Caco-2 (cell line): ENCODE measurements at regions of chr11 and their contacts with region 1.

Region 1: GRCh38 chr11:95067039-95067840 is 521 bp downstream of the SRSF8 start:
- DNase-seq: peak; percentile 88 to 95
- H3K4me3 ChIP-seq: peak overlapping the region; percentile 46
- H3K4me3 Mint-ChIP-seq: peak overlapping the region; percentile 100
- H3K27ac Mint-ChIP-seq: peak overlapping the region; percentile 99
- H3K4me1 ChIP-seq: peaks cover 12% of the 10 kb centered on the region
- H3K4me1 Mint-ChIP-seq: peaks cover 15% of the 10 kb centered on the region
- H3K27me3 ChIP-seq: no peaks in the 10 kb centered on the region
- H3K27me3 Mint-ChIP-seq: peaks cover 12% of the 10 kb centered on the region
- CTCF ChIP-seq: peak; percentile 52 to 98

Region 2: GRCh38 chr11:94543695-94544645 is 523.3 kb before region 1 on chr11 and contains the start of gene FUT4:
- CTCF ChIA-PET with region 1: no interaction called
- POLR2A ChIA-PET with region 1: interaction called, 4 read pairs
- intact Hi-C with region 1: loop called (anchors 5 kb)
- DNase-seq: peak; percentile 96 to 98
- H3K4me3 ChIP-seq: peak within 1 kb of the TSS; percentile 71
- H3K4me3 Mint-ChIP-seq: peak within 1 kb of the TSS; percentile 86
- H3K27ac Mint-ChIP-seq: peak within 1 kb of the TSS; percentile 90
- H3K4me1 ChIP-seq: peaks cover 29% of the 10 kb centered on the region
- H3K4me1 Mint-ChIP-seq: peaks cover 34% of the 10 kb centered on the region
- H3K27me3 ChIP-seq: no peaks in the 10 kb centered on the region
- H3K27me3 Mint-ChIP-seq: no peaks in the 10 kb centered on the region
- CTCF ChIP-seq: no peak
- total RNA-seq, gene FUT4: 24.5 and 25.0 TPM in 2 replicates

Region 3: DNA sequence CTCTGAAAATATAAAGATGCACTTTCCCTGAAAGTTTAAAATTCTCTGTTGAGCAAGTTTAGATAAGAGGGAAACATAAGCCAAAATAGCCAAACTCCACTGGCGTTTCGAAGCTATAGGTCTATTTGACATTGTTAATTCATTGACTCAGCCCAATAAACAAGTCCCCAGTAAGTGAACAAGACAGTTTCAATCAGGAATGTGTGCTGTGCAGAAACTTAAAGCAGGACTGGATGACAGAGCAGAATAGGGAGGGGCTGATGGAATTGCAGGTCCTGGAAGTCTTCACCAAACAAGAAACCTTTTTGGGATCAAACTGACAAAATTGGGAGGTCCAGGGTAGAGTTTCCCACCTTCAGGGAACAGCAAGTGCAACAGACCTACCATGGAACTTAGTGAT is 51.1 kb before region 1 on chr11:
- CTCF ChIA-PET with region 1: no interaction called
- POLR2A ChIA-PET with region 1: no interaction called
- intact Hi-C with region 1: loop called (anchors 2 kb)
- DNase-seq: peak in 1 of 2 experiments; percentile 35
- H3K4me3 ChIP-seq: no peak overlapping the region
- H3K4me3 Mint-ChIP-seq: no peak overlapping the region
- H3K27ac Mint-ChIP-seq: no peak overlapping the region
- H3K4me1 ChIP-seq: peaks cover 3% of the 10 kb centered on the region; the same call in 1 of the 2 replicates
- H3K4me1 Mint-ChIP-seq: peaks cover 6% of the 10 kb centered on the region
- H3K27me3 ChIP-seq: no peaks in the 10 kb centered on the region
- H3K27me3 Mint-ChIP-seq: no peaks in the 10 kb centered on the region
- CTCF ChIP-seq: no peak

Region 4: GRCh38 chr11:95138448-95138847 is 71.2 kb after region 1 on chr11:
- CTCF ChIA-PET with region 1: interaction called, 23 read pairs
- POLR2A ChIA-PET with region 1: interaction called, 3 read pairs
- intact Hi-C with region 1: loop called (anchors 1 kb)
- DNase-seq: peak in 1 of 2 experiments; percentile 61
- H3K4me3 ChIP-seq: no peak overlapping the region
- H3K4me3 Mint-ChIP-seq: no peak overlapping the region
- H3K27ac Mint-ChIP-seq: no peak overlapping the region
- H3K4me1 ChIP-seq: no peaks in the 10 kb centered on the region
- H3K4me1 Mint-ChIP-seq: peaks cover 5% of the 10 kb centered on the region
- H3K27me3 ChIP-seq: no peaks in the 10 kb centered on the region
- H3K27me3 Mint-ChIP-seq: peaks cover 3% of the 10 kb centered on the region
- CTCF ChIP-seq: peak; percentile 44 to 71

Region 5: GRCh38 chr11:95705485-95706124 is 638.4 kb after region 1 on chr11:
- CTCF ChIA-PET with region 1: interaction called, 5 read pairs
- POLR2A ChIA-PET with region 1: no interaction called
- intact Hi-C with region 1: loop called (anchors 5 kb)
- DNase-seq: peak; percentile 85 to 89
- H3K4me3 ChIP-seq: no peak overlapping the region
- H3K4me3 Mint-ChIP-seq: no peak overlapping the region
- H3K27ac Mint-ChIP-seq: no peak overlapping the region
- H3K4me1 ChIP-seq: peaks cover 38% of the 10 kb centered on the region
- H3K4me1 Mint-ChIP-seq: peaks cover 24% of the 10 kb centered on the region
- H3K27me3 ChIP-seq: no peaks in the 10 kb centered on the region
- H3K27me3 Mint-ChIP-seq: no peaks in the 10 kb centered on the region
- CTCF ChIP-seq: peak; percentile 93 to 94

Region 6: GRCh38 chr11:95790123-95790932 is 723.1 kb after region 1 on chr11 and contains the start of gene CEP57:
- CTCF ChIA-PET with region 1: interaction called, 3 read pairs
- POLR2A ChIA-PET with region 1: interaction called, 11 read pairs
- intact Hi-C with region 1: loop called (anchors 5 kb)
- DNase-seq: peak; percentile 99
- H3K4me3 ChIP-seq: peak within 1 kb of the TSS; percentile 72
- H3K4me3 Mint-ChIP-seq: peak within 1 kb of the TSS; percentile 72
- H3K27ac Mint-ChIP-seq: peak within 1 kb of the TSS; percentile 100
- H3K4me1 ChIP-seq: peaks cover 19% of the 10 kb centered on the region; the same call in 1 of the 2 replicates
- H3K4me1 Mint-ChIP-seq: peaks cover 23% of the 10 kb centered on the region
- H3K27me3 ChIP-seq: no peaks in the 10 kb centered on the region
- H3K27me3 Mint-ChIP-seq: no peaks in the 10 kb centered on the region
- CTCF ChIP-seq: no peak
- total RNA-seq, gene CEP57: 117 and 125 TPM in 2 replicates